ENCODE measurements at regions of chr3 and their contacts with region 1.

Region 1: GRCh38 chr3:48188266-48189201 is at the start of gene CDC25A:
- DNase-seq: peak; percentile 88 to 97 (median 93)
- H3K4me3 ChIP-seq: peak within 1 kb of the TSS in 1 of 2 donors; percentile 95
- H3K4me3 Mint-ChIP-seq: peak within 1 kb of the TSS; percentile 92 to 96 (median 95)
- H3K27ac ChIP-seq: peak within 1 kb of the TSS; percentile 44
- H3K27ac Mint-ChIP-seq: peak within 1 kb of the TSS; percentile 38 to 90 (median 83)
- H3K4me1 ChIP-seq: peaks cover 12% of the 10 kb centered on the region
- H3K4me1 Mint-ChIP-seq: peaks cover 8 to 23% (median 15%) of the 10 kb centered on the region in 4 donors
- H3K27me3 ChIP-seq: no peaks in the 10 kb centered on the region
- H3K27me3 Mint-ChIP-seq: peaks cover 3 to 11% of the 10 kb centered on the region in 2 donors
- total RNA-seq, gene CDC25A: not detected

Region 2: DNA sequence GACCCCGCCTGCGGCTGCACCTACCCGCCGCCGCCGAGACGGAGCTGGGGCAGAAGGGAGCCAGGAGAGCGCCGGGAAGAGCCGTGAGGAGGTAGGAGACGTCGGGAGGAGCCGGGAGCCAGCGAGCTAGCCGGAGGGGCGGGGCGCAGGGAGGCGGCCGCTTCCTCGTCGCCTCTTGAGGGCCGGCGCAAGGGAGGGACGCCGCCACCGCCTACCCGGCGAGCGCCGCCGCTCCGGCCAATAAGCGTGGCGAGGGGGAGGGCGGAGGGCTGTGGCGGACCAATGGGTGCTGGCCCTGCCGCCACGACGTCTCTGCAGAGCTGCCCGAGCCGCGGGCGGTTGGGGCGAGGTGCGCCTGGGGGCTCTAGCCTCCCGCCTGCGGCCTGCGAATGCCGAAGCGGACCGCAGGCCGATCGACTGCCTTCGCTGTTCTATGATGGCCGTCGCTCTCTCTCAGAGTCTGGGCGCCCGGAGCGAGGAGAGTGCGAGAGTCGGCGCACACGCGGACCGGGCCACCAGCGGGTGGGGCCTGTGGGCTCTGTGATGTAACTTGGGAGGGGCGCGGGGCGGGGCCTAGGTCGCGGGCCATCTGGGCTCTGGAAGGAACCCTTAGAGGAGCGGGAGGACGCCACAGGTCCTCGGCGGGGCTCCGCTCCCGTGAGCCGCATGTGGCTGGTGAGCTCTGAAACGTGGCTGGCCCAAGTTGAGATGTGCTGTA is 99.6 kb before region 1 on chr3:
- CTCF ChIA-PET with region 1: no interaction called
- POLR2A ChIA-PET with region 1: interaction called, 6 read pairs
- intact Hi-C with region 1: loop called (anchors 1 kb)
- DNase-seq: peak; percentile 93 to 96 (median 95)
- H3K4me3 ChIP-seq: peak overlapping the region; percentile 84 to 96
- H3K4me3 Mint-ChIP-seq: peak overlapping the region; percentile 92 to 100 (median 94)
- H3K27ac ChIP-seq: peak overlapping the region; percentile 77
- H3K27ac Mint-ChIP-seq: peak overlapping the region; percentile 97 to 99 (median 98)
- H3K4me1 ChIP-seq: peaks cover 31% of the 10 kb centered on the region
- H3K4me1 Mint-ChIP-seq: peaks cover 18 to 33% (median 29%) of the 10 kb centered on the region in 4 donors
- H3K27me3 ChIP-seq: no peaks in the 10 kb centered on the region
- H3K27me3 Mint-ChIP-seq: peaks cover 0 to 2% of the 10 kb centered on the region in 2 donors

Region 3: GRCh38 chr3:48232734-48233133 is 44.2 kb after region 1 on chr3:
- CTCF ChIA-PET with region 1: no interaction called
- POLR2A ChIA-PET with region 1: no interaction called
- intact Hi-C with region 1: no loop called
- DNase-seq: peak in 4 of 5 donors; percentile 22 to 42 (median 32)
- H3K4me3 ChIP-seq: no peak overlapping the region
- H3K4me3 Mint-ChIP-seq: no peak overlapping the region
- H3K27ac ChIP-seq: no peak overlapping the region
- H3K27ac Mint-ChIP-seq: no peak overlapping the region
- H3K4me1 ChIP-seq: no peaks in the 10 kb centered on the region
- H3K4me1 Mint-ChIP-seq: peaks cover 0 to 3% (median 0%) of the 10 kb centered on the region in 4 donors
- H3K27me3 ChIP-seq: no peaks in the 10 kb centered on the region
- H3K27me3 Mint-ChIP-seq: peaks cover 0 to 8% of the 10 kb centered on the region in 2 donors

Region 4: DNA sequence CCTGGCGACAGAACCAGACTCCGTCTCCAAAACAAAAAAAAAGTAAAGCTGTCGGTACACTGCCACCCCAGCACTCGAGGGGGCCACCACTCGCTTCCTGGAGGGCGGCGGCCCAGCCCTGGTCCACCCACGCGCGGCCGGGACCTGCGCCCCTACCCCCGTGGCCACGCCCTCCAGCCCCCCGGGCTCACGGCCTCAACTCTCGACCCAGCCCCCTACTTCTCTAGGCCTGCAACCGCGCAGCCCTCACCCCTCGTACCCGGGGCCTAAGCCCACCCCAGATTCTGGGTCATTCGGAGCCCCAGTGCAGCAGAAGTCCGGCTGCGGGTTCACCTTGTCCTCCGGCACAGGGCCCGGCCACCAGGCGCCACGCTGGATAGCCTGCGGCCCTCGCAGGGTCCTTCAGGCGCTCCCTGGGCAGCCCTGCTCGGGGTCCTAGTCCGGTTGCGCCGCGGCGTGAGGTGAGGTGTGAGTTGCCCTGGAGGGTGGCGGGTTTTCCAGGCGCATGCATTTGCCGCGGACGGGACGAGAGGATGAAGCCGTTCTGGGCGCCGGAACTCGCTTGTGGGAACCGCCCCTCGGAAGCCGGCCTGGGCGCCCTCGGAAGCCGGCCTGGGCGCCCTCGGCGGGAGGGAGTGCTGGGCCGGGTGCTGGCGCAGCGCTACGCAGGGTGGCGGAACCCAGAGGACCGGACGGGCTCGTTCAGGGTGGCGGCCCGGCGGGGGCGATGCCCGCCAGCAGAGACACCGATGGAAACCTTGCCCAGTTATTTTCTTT is 112.7 kb after region 1 on chr3:
- CTCF ChIA-PET with region 1: interaction called, 3 read pairs
- POLR2A ChIA-PET with region 1: no interaction called
- intact Hi-C with region 1: loop called (anchors 1 kb)
- DNase-seq: peak; percentile 83 to 89 (median 85)
- H3K4me3 ChIP-seq: peak within 1 kb of the TSS; percentile 86 to 89
- H3K4me3 Mint-ChIP-seq: peak within 1 kb of the TSS; percentile 91 to 96 (median 94)
- H3K27ac ChIP-seq: peak within 1 kb of the TSS; percentile 90
- H3K27ac Mint-ChIP-seq: peak within 1 kb of the TSS; percentile 78 to 99 (median 97)
- H3K4me1 ChIP-seq: peaks cover 20% of the 10 kb centered on the region
- H3K4me1 Mint-ChIP-seq: peaks cover 25 to 57% (median 32%) of the 10 kb centered on the region in 4 donors
- H3K27me3 ChIP-seq: no peaks in the 10 kb centered on the region
- H3K27me3 Mint-ChIP-seq: no peaks in the 10 kb centered on the region